ENCODE measurements at regions of chr14 and their contacts with region 1.

Region 1: DNA sequence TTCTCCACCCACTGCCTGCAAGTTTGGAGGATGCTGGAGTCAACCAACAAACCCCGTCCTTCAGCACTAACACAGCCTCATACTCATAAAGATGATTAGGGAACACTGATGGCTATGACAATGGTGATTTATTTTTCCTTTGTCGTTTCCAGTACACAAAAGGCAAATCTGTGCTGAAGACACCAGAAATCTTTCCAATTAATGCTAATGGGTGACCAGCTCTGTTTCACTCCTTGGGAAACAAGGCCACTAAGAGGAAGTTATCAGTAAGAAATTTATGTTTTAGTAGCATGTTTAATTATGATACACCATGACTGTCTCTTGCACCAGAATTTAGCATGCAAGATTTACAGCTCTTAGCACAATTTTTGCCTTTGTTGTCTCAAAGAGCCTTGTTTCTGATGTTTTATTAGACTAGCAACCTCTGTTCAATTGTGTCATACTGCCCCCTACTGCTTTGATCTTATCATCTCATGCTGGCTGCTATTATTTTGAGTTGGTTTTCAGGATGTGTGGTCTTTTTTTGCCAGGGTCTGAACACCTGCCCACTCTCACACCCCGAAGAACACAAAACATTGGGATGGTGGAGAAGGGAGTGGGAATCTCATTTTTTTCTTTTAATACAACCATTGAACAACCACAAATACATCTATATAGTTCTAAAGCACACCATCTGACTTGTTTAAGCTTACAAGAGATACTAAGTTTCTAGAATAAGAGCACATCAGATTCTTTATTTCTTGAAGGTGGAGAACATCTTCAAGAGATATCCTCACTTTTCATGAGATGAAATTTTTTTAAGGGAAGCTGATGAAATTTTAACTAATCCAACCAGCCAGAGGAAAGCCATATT is 160.9 kb downstream of the SPTSSA start:
- DNase-seq: peak; percentile 67
- H3K4me3 ChIP-seq: no peak overlapping the region
- H3K27ac ChIP-seq: no peak overlapping the region
- H3K4me1 ChIP-seq: no peaks in the 10 kb centered on the region
- H3K27me3 ChIP-seq: no peaks in the 10 kb centered on the region
- CTCF ChIP-seq: peak; percentile 74

Region 2: DNA sequence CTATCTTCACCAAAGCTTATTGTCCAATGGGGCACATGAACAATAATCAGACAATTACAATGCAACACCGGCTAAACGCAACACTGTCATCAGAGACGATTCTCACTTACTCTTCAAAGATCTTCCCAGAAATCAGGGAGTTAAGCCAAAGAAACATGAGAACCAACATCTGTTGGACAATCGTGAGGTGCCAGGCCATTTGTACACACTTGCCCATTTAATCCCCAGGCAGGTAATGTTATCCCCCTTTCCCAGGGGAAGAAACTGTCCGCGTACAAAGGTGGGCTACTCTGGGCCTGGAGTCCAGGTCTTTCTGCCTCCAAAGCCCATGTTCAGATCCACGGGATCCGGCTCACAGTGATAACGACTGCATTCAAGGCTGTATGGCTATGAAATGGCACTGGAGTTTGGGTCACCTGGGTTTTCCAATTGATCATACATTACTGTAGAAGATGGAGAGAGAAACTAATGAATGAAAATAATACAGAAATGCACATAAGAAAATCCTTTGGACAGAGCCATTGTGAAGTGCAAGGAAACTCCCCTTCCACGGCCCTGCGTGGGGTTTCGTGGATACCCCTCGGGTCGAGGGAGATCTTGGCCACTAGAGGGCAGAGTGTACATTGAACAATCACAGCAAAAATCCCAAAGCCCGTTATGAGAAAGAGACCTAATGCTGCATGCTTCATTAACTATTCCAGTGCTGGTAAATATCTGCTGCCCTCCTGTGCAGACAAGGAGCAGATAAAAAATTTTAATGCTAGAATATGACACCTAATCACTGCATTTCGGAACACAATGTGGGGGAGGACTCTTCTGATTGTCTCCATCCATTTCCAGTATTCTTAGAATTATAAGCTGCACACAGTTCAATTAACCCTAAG is 461.7 kb before region 1 on chr14:
- CTCF ChIA-PET with region 1: no interaction called
- POLR2A ChIA-PET with region 1: no interaction called
- intact Hi-C with region 1: loop called (anchors 2 kb)
- DNase-seq: peak; percentile 73
- H3K4me3 ChIP-seq: no peak overlapping the region
- H3K27ac ChIP-seq: no peak overlapping the region
- H3K4me1 ChIP-seq: no peaks in the 10 kb centered on the region
- H3K27me3 ChIP-seq: no peaks in the 10 kb centered on the region
- CTCF ChIP-seq: peak; percentile 89

Measured in A673 (cell line).